Activated CD4-positive, alpha-beta T cell treated with anti-CD3 and anti-CD28 coated beads for 36 hours (primary cell): ENCODE measurements at regions of chr1 and their contacts with region 1.

Region 1: DNA sequence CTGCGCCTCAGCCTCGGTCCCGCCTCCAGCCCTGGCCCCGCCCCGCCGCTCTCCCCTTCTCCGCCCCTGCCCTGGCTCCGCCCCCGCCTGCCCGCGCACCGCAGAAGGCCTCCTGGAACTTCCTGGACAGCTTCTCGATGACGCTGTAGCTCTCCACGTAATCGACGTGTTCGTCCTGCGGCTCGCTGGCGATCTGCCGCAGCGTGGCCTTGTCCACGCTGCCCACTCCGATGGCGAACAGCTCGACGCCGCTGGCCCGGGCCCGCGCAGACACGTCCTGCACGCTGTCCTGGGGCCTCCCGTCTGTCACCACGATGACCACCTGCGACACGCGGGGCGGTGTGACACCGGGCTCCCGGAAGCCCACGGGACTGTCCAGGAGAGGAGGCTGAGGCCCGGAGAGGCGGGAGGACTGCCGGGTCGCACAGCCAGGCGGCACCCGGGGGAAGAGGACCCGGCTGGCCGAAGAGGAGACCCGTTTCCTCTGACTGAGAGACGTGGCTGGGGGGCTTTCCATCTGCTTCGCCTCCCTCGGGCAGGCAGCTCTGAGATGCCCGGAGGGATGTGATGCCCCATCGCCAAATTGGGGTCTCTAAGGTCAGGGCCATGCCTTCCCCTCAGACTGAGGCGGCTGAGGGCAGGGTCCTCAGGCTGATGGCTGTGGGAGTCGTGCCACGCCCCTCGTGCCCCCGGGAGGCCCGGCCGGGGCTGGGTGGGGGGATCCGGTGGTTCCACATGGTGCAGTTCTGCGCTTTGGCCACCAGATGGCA is 4.6 kb downstream of the MATN1 start:
- DNase-seq: peak; percentile 91
- ATAC-seq: peak; percentile 66
- H3K4me3 Mint-ChIP-seq: peak overlapping the region; percentile 84
- H3K27ac Mint-ChIP-seq: peak overlapping the region; percentile 94
- H3K4me1 Mint-ChIP-seq: peaks cover 19% of the 10 kb centered on the region
- H3K27me3 Mint-ChIP-seq: no peaks in the 10 kb centered on the region

Region 2: GRCh38 chr1:28886731-28887418 is 1831.9 kb before region 1 on chr1:
- CTCF ChIA-PET with region 1: no interaction called
- POLR2A ChIA-PET with region 1: no interaction called
- intact Hi-C with region 1: loop called in 1 of 2 experiments (anchors 5 kb)
- DNase-seq: peak; percentile 95
- ATAC-seq: peak; percentile 77
- H3K4me3 Mint-ChIP-seq: peak overlapping the region; percentile 90
- H3K27ac Mint-ChIP-seq: peak overlapping the region; percentile 88
- H3K4me1 Mint-ChIP-seq: peaks cover 43% of the 10 kb centered on the region
- H3K27me3 Mint-ChIP-seq: no peaks in the 10 kb centered on the region

Region 3: DNA sequence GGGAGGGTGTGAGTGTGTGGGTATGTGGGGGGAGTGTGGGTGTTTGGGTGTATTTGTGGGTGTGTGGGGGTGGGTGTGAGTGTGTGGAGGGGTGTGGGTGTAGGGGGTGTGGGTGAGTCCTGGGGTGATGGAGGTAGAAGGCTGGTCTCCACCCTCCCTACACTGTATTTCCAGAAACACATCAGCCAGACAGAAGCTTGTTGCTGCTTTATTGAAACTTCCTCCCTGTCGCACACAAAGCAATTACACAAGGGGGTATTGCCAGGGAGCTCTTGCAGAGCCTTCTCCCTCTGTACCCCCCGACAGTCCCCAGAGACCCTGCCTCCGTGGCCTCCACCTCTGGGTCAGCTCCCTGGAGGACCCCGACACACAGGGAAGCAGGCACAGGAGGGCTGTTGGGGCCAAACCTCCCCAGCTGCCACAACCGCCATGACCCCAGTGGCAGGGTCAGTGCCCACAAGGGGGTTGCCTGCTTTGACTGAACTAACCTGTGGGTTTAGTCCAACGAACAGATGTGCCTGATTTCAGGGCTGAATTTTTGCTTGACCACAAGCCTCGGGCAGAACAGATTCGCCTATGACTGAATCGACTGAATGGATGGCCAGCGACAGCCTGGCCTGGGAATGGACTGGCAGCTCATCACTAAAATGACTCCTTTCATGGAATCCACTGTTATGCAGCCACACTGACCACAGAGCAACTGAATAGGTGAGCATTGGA is 13.6 kb after region 1 on chr1:
- CTCF ChIA-PET with region 1: interaction called, 15 read pairs
- POLR2A ChIA-PET with region 1: interaction called, 3 read pairs
- intact Hi-C with region 1: no loop called
- DNase-seq: no peak
- ATAC-seq: peak; percentile 25
- H3K4me3 Mint-ChIP-seq: no peak overlapping the region
- H3K27ac Mint-ChIP-seq: peak overlapping the region; percentile 60
- H3K4me1 Mint-ChIP-seq: peaks cover 11% of the 10 kb centered on the region
- H3K27me3 Mint-ChIP-seq: no peaks in the 10 kb centered on the region

Region 4: DNA sequence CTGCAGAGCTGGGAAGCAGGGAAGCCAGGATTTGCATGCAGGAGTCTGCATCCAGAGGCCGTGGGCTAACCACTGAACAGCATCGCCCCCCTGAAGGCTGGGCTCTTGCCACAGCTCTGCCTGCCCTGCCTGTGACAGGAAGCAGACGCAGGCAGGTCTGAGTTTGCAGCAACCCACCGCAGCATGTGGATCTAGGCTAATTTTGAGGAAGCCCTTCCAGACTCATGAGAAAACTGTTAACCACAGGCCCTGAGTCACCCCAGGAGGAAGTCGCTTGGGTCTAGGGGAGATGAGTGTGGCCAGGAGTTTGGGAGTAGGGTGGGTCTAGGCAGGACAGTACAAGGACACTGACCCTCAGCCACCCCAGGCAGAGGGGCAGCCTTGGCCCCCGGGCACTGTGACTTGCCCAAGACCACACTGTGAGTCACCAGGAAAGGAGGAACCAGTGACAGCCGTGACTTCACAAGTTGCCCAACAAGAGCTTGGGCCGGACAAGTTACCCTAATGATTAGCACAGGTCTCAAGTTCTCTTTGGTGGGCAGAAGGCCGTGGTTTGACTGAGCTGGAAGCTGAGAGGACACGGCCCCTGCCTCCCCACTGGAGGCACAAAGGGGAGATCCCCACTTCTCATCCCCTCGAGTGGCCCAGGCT is 37.8 kb after region 1 on chr1:
- CTCF ChIA-PET with region 1: interaction called, 19 read pairs
- POLR2A ChIA-PET with region 1: interaction called, 5 read pairs
- intact Hi-C with region 1: loop called (anchors 1 to 2 kb)
- DNase-seq: peak; percentile 84
- ATAC-seq: peak; percentile 54
- H3K4me3 Mint-ChIP-seq: peak overlapping the region; percentile 92
- H3K27ac Mint-ChIP-seq: peak overlapping the region; percentile 99
- H3K4me1 Mint-ChIP-seq: peaks cover 81% of the 10 kb centered on the region
- H3K27me3 Mint-ChIP-seq: no peaks in the 10 kb centered on the region

Region 5: GRCh38 chr1:30911046-30911954 is 192.5 kb after region 1 on chr1:
- CTCF ChIA-PET with region 1: interaction called, 14 read pairs
- POLR2A ChIA-PET with region 1: no interaction called
- intact Hi-C with region 1: loop called (anchors 1 to 2 kb)
- DNase-seq: peak; percentile 82
- ATAC-seq: peak; percentile 74
- H3K4me3 Mint-ChIP-seq: no peak overlapping the region
- H3K27ac Mint-ChIP-seq: no peak overlapping the region
- H3K4me1 Mint-ChIP-seq: peaks cover 13% of the 10 kb centered on the region
- H3K27me3 Mint-ChIP-seq: peaks cover 20% of the 10 kb centered on the region

Region 6: DNA sequence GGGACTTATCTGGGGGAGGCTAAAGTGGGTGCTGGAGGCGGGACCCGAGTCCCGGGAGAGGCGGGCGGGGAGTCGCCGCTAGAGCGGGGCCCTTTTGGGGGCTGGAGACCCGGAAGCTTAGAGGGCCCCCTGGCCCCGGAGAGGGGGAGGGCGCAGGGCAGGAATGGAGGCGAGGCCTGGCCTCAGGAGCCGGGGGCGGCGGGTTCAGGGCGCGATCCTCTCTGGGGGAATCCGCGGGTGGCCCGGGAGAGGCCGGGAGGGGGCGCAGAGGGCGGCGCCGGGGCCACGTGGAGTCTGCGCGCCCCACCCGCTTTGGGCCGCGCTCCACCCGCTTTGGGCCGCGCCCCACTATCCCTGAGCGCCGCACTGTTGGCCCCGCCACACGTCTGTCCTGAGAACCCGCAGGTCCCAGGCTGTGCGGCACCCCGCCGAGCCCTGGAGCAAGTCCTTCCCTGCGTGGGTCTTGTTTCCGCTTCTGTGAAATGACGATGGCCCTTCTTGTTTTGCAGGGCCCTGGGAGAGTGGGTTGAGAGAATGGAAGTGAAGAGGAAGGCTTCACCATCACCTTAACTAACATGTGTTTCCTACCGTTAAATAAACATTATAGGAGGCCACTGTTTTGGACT is 436.5 kb after region 1 on chr1:
- CTCF ChIA-PET with region 1: no interaction called
- POLR2A ChIA-PET with region 1: no interaction called
- intact Hi-C with region 1: loop called in 1 of 2 experiments (anchors 1 kb)
- DNase-seq: peak; percentile 79
- ATAC-seq: peak; percentile 82
- H3K4me3 Mint-ChIP-seq: peak overlapping the region; percentile 88
- H3K27ac Mint-ChIP-seq: peak overlapping the region; percentile 87
- H3K4me1 Mint-ChIP-seq: peaks cover 8% of the 10 kb centered on the region
- H3K27me3 Mint-ChIP-seq: no peaks in the 10 kb centered on the region

Region 7: GRCh38 chr1:31644560-31645273 is 925.9 kb after region 1 on chr1 and contains the start of gene PEF1:
- CTCF ChIA-PET with region 1: no interaction called
- POLR2A ChIA-PET with region 1: interaction called, 3 read pairs
- intact Hi-C with region 1: loop called in 1 of 2 experiments (anchors 1 kb)
- DNase-seq: peak; percentile 100
- ATAC-seq: peak; percentile 91
- H3K4me3 Mint-ChIP-seq: peak within 1 kb of the TSS; percentile 95
- H3K27ac Mint-ChIP-seq: peak within 1 kb of the TSS; percentile 100
- H3K4me1 Mint-ChIP-seq: peaks cover 23% of the 10 kb centered on the region
- H3K27me3 Mint-ChIP-seq: no peaks in the 10 kb centered on the region
- total RNA-seq, gene PEF1: 48.8 to 59.3 TPM